AG04450 (cell line): ENCODE measurements at regions of chr4 and their contacts with region 1.

Region 1: GRCh38 chr4:151129801-151130200 is 30.4 kb downstream of the RPS3A start:
- DNase-seq: no peak
- H3K4me3 ChIP-seq: no peak overlapping the region
- H3K27ac ChIP-seq: no peak overlapping the region
- H3K27me3 ChIP-seq: no peaks in the 10 kb centered on the region
- CTCF ChIP-seq: no peak

Region 2: DNA sequence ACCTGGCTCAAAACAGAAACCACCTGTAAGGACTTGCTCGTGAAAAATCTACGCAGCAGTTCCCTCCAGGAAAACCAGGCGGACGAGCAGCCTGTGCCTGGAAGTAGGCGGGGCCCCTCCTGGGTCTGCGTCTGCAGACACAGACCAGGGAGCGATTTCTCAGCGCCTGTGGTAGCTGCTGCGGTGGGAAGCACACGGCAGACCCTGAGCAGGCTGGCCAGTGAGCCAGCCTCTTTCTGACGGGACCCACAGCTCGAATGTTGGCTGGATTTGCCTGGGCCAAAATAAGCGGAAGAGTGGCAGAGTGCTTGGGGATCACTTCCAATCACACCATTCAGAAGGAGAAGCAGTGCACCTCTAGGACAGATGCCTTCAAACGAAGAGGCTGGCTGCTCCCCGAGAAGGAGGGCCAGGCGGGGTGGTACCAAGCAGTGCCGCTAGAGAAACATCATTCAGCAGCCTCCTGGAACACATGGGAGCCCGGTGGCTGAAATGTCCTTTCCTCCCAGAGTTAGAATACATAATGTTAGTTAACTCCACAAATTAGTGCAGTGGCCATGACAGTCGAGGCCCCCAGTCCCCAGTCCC is 545.1 kb after region 1 on chr4:
- CTCF ChIA-PET with region 1: no interaction called
- POLR2A ChIA-PET with region 1: interaction called, 12 read pairs
- DNase-seq: no peak
- H3K4me3 ChIP-seq: no peak overlapping the region
- H3K27ac ChIP-seq: no peak overlapping the region
- H3K27me3 ChIP-seq: no peaks in the 10 kb centered on the region
- CTCF ChIP-seq: 0 out of 2 replicates have a peak, but pooled peaks have one; percentile 14

Region 3: DNA sequence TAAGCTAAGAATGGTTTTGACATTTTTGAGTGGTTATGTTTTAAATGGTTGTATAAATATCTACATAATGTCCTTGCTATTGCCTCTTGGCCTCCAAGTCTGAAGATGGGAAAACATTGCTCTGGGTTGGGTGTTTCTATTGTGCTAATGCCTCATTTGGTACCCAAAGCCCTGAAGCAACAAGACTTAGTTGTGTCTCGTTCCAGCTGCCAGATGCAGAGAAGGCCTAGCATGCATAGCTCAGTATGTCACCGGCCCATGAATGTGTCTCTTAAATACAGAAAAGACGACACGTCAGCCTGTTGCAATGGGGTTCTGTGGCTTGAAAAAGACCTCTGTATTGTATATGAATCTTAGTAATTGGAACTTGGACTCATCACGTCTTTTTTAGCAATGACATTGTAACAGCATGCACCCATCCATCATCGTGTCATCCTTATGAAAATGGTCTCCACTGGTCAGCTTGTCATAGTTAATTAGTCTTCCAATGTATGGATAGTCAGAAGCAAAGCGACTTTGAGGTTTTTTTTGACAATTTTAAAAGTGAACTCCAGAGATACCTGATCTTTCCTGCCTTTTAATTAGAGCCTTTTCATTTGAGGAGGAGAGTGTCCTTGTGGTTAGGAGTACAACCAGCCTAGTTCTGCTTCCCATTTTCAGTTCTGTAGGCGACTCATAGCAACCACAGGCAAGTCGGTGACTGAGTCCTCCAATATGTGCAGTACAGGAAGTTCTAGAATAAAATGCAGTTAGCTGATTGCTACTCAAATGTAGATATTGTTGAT is 757.4 kb after region 1 on chr4:
- CTCF ChIA-PET with region 1: no interaction called
- POLR2A ChIA-PET with region 1: no interaction called
- DNase-seq: no peak
- H3K4me3 ChIP-seq: no peak overlapping the region
- H3K27ac ChIP-seq: no peak overlapping the region
- H3K27me3 ChIP-seq: peaks cover 8% of the 10 kb centered on the region
- CTCF ChIP-seq: no peak